ENCODE measurements at regions of chr10 and their contacts with region 1.

Region 1: DNA sequence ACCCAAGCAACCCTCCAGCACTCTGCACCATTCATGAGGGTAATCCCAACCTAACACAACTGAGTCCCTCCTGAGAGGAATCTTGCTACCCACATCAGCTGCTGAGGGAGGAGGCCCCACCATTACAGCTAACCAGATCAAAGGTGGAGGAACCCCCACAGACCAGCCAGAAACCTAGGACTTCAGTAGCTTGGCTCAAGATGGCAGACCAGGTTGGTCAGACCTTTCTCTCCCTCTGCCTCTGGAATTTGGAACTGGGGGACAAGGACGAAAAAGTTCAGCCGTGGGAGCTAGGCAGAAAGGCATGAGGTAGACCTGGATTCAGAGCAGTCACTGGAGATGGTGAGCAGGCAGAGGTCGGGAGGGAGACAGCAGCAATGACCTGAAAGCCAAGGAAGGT is 101.3 kb upstream of the CACUL1 start:
- DNase-seq: no peak
- ATAC-seq: no peak
- H3K4me3 Mint-ChIP-seq: no peak overlapping the region
- H3K27ac Mint-ChIP-seq: no peak overlapping the region
- H3K4me1 Mint-ChIP-seq: no peaks in the 10 kb centered on the region
- H3K27me3 Mint-ChIP-seq: peaks cover 3% of the 10 kb centered on the region

Region 2: GRCh38 chr10:118447478-118448270 is 408.4 kb before region 1 on chr10:
- POLR2A ChIA-PET with region 1: interaction called, 11 read pairs
- DNase-seq: no peak
- ATAC-seq: no peak
- H3K4me3 Mint-ChIP-seq: no peak overlapping the region
- H3K27ac Mint-ChIP-seq: no peak overlapping the region
- H3K4me1 Mint-ChIP-seq: no peaks in the 10 kb centered on the region
- H3K27me3 Mint-ChIP-seq: peaks cover 47% of the 10 kb centered on the region

Region 3: GRCh38 chr10:118882741-118883140 is 26.6 kb after region 1 on chr10:
- POLR2A ChIA-PET with region 1: no interaction called
- DNase-seq: no peak
- ATAC-seq: no peak
- H3K4me3 Mint-ChIP-seq: no peak overlapping the region
- H3K27ac Mint-ChIP-seq: no peak overlapping the region
- H3K4me1 Mint-ChIP-seq: no peaks in the 10 kb centered on the region
- H3K27me3 Mint-ChIP-seq: peaks cover 38% of the 10 kb centered on the region